Activated CD4-positive, alpha-beta memory T cell treated with anti-CD3 and anti-CD28 coated beads for 36 hours (primary cell): ENCODE measurements at regions of chr17 and their contacts with region 1.

Region 1: DNA sequence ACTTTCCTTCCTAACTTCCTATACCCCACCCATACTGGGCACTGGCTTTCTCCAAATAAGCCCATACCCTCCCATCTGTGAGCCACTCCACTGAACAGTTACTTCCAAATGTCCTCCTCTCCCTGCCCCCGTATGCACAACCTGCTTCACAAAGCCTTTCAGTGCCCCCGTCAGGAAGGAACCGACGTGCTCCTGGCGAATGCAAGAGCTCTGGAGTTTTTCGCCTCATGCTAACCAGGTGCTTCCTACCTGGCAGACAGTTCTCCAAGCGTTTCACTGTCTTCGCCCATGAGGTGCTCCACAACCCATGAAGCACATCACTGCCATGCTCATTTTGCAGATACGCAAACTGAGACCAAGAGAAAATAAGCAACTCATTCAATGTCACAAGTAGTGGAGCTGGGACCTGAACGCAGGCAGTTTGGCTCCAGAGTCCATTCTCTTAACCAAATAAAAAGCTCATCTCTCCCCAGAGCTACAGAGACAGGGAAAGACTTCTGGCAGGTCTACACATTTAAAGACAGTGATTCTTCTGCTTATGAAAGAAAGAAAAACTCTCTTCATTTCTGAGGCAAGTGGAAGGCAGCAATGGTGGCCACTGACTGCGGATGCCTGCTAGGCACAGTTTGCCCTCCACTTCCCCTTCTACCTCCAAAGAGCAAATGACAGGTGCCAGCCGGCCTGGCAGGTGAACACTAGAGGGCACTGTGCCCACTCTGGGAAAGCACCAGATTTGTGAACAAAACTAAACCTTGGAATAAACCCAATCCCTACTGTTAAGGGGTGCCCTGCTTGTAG is 23.8 kb downstream of the SPHK1 start:
- DNase-seq: peak; percentile 82
- H3K4me3 Mint-ChIP-seq: no peak overlapping the region
- H3K27ac Mint-ChIP-seq: no peak overlapping the region
- H3K4me1 Mint-ChIP-seq: peaks cover 8% of the 10 kb centered on the region
- H3K27me3 Mint-ChIP-seq: no peaks in the 10 kb centered on the region

Region 2: DNA sequence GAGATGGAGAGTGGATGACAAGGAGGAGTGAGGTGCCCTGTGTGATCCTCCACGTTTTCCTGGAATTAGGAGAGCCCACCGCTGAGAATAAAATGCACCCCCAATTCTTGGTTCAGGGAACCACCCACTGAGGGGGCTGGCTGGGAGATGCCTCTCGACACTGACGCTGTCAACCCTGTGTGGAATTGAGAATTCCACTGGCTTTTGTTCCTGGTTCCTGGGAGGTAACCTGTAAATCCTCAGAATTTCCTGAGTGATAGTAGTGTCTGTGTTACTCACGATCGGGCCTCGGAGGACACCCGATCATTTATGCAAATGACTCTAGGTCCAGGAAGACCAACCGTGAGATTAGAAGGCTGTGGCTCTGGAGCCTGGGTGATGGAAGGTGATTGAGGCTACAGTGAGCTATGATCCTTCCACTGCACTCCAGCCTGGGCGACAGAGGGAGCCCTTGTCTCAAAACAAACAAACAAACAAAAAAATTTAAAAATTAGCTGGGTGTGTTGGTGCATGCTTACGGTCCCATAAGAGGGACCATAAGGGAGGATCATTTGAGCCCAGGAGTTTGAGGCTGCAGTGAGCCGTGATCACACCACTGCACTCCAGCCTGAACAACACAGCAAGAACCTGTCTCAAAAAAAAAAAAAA is 42.9 kb before region 1 on chr17:
- CTCF ChIA-PET with region 1: no interaction called
- POLR2A ChIA-PET with region 1: no interaction called
- intact Hi-C with region 1: no loop called
- DNase-seq: no peak
- H3K4me3 Mint-ChIP-seq: no peak overlapping the region
- H3K27ac Mint-ChIP-seq: no peak overlapping the region
- H3K4me1 Mint-ChIP-seq: no peaks in the 10 kb centered on the region
- H3K27me3 Mint-ChIP-seq: no peaks in the 10 kb centered on the region

Region 3: DNA sequence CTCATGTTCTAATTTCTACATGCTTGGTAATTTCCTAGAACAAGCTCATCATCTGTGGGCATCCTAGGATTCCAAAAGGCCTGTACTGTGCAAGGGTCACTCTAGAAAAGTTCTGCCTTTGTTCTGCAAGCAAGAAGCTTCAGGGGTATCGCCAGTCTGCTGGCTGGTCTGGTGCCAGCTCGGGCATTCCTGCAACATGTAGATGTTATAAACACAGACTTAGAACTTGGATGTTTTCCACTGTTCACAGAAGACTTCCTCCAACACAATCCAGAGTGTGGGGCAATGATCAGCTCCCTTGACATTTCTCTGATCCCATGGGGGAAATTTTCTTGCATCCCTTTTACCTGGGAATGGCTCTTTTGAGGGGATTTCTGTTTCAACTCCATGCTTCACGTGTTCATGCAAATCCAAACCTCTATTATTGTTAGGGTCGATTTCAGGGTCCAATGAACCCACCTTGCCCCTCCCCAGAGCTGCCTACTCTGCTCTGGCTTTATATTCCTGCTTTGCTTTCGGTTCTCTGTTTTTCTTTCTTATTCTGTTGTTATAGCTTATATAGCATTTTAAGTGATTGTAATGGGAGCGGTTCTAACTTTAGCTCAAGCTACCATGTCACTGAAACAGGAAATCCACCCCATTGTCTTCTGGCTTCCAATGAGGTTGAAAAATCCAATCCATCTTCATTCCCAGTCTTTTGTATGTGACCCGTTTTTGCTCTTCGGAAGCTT is 19.4 kb after region 1 on chr17:
- CTCF ChIA-PET with region 1: interaction called, 16 read pairs
- POLR2A ChIA-PET with region 1: no interaction called
- intact Hi-C with region 1: no loop called
- DNase-seq: no peak
- H3K4me3 Mint-ChIP-seq: no peak overlapping the region
- H3K27ac Mint-ChIP-seq: no peak overlapping the region
- H3K4me1 Mint-ChIP-seq: peaks cover 5% of the 10 kb centered on the region
- H3K27me3 Mint-ChIP-seq: no peaks in the 10 kb centered on the region

Region 4: GRCh38 chr17:76446449-76447231 is 38.4 kb after region 1 on chr17:
- CTCF ChIA-PET with region 1: interaction called, 3 read pairs
- POLR2A ChIA-PET with region 1: interaction called, 3 read pairs
- intact Hi-C with region 1: loop called (anchors 5 kb)
- DNase-seq: peak; percentile 24
- H3K4me3 Mint-ChIP-seq: no peak overlapping the region
- H3K27ac Mint-ChIP-seq: peak overlapping the region; percentile 43
- H3K4me1 Mint-ChIP-seq: peaks cover 82% of the 10 kb centered on the region
- H3K27me3 Mint-ChIP-seq: no peaks in the 10 kb centered on the region

Region 5: DNA sequence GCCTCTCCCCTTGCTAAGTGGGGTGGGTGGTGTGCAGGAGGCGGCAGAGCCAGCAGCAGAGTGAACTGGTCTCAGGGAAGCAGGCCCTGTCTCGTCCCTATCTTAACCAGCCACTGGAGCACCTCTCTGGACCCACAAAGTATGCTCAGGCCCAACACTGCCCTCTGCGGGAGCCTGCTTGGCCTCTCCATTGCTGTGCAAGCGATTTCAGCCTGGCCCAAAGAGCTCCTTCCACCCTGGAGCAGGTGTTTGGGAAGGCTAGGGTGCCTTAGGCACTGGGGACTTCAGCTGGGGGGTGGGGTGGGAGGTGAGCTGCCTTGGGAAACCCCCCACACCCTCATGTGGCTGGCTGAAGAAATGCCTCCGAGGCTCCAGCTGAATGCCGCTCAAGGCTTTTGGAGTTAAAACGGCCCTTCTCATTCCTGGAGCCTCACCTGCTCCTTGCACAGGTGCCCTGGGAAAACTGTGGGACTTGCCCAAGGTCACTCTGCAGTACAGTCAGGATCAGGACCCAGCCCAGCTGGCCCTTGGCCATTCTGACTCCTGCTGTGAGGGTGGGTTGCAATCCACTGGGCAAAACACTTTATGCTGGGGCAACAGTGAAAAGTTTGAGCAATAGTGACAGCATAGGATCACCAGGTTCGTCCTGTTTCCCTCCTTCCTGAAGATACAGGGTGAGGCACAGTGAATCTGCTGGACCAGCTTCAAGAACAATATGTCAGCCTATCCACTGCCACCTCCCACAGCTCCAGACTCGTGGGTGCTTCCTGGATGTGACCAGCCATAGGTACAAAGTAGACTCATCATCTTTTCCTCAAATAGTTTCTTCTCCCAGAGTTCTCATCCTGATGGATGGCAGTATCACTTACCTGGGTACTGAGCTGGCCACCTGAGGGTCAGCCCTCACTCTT is 50.6 kb after region 1 on chr17:
- CTCF ChIA-PET with region 1: interaction called, 6 read pairs
- POLR2A ChIA-PET with region 1: no interaction called
- intact Hi-C with region 1: loop called (anchors 1 kb)
- DNase-seq: peak; percentile 40
- H3K4me3 Mint-ChIP-seq: no peak overlapping the region
- H3K27ac Mint-ChIP-seq: no peak overlapping the region
- H3K4me1 Mint-ChIP-seq: no peaks in the 10 kb centered on the region
- H3K27me3 Mint-ChIP-seq: no peaks in the 10 kb centered on the region

Region 6: DNA sequence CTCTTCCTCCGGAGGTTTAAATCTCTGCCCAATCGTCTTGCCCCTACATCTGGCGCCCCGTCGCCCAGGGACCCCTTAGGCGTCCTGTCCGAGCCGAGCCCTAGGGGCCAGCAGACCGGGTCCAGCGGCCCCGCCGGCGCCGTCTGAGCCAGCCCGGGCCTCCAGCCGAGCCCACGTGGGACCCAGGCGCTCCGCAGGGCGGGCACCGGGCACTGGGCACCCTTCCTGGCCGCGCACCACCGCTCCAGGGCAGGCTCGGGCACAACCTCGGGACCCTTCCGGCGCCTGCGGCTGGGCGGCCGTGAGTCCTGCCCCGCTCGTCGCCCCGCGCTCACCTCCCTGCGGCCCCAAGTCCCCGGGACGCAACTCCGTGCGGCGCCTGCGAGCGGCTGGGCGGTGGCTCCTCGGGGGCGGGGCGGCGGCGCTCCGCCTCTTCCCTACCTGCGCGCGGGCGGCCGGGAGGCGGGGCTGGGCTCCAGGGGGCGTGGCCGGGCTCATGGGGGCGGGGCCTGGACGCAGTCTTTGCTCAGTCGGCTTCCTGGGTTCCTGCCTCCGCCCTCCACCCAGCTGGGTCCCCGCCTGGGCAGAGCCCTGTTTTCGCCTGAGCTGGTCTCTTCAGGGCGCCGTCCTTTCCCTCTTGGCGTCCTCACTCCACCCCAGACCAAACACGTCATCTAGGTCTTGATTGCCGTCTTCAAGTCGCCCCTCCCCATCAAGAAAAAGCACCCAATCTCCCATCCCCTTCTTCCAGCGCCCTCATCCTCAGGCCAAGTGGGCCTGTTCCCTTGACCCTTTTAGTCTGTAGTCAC is 93.0 kb after region 1 on chr17 and contains the start of gene RHBDF2:
- CTCF ChIA-PET with region 1: interaction called, 72 read pairs
- POLR2A ChIA-PET with region 1: no interaction called
- intact Hi-C with region 1: loop called (anchors 1 kb)
- DNase-seq: peak; percentile 98
- H3K4me3 Mint-ChIP-seq: peak within 1 kb of the TSS; percentile 86
- H3K27ac Mint-ChIP-seq: peak within 1 kb of the TSS; percentile 85
- H3K4me1 Mint-ChIP-seq: peaks cover 45% of the 10 kb centered on the region
- H3K27me3 Mint-ChIP-seq: no peaks in the 10 kb centered on the region
- total RNA-seq, gene RHBDF2: 28.9 to 30.0 TPM